ENCODE measurements at regions of chrX and their contacts with region 1.

Region 1: DNA sequence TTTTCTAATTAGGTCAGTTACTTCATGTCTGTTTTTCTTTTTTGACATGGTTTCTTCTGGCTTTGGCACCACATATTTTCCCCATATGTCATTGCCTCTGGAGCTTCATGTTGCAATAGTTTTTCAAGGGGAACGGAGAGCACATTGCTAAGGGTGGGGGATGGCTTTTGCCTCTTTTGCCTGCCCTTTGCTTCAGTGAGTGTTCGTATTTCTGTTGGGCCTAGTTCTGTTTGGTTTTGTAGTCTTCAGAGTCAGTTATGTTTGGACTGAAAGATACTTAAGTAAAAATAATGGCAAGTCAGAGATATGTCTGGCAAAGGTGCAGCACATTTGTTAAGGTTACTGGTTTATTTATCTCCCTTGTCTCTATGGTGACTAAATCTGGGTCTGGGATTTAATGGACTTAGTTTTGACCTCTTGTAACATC is 29.1 kb downstream of the FHL1 start:
- DNase-seq: no peak
- H3K4me3 ChIP-seq: no peak overlapping the region
- H3K27ac ChIP-seq: no peak overlapping the region
- H3K4me1 ChIP-seq: no peaks in the 10 kb centered on the region
- H3K27me3 ChIP-seq: no peaks in the 10 kb centered on the region
- CTCF ChIP-seq: no peak
- POLR2A ChIP-seq: no peak

Region 2: DNA sequence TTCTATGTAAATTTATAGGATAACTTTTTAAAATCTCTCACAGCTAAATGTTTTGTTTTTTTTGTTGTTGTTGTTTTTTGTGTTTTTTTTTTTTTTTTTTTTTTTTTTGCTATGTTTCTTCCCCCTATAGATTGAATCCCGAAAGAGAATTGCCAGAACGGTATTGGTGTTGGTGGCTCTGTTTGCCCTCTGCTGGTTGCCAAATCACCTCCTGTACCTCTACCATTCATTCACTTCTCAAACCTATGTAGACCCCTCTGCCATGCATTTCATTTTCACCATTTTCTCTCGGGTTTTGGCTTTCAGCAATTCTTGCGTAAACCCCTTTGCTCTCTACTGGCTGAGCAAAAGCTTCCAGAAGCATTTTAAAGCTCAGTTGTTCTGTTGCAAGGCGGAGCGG is 315.4 kb after region 1 on chrX:
- CTCF ChIA-PET with region 1: no interaction called
- POLR2A ChIA-PET with region 1: interaction called, 10 read pairs
- dilution Hi-C with region 1: no loop called
- intact Hi-C with region 1: no loop called
- DNase-seq: no peak
- H3K4me3 ChIP-seq: no peak overlapping the region
- H3K27ac ChIP-seq: no peak overlapping the region
- H3K4me1 ChIP-seq: peaks cover 3% of the 10 kb centered on the region
- H3K27me3 ChIP-seq: peaks cover 3 to 13% of the 10 kb centered on the region in 2 experiments
- CTCF ChIP-seq: no peak
- POLR2A ChIP-seq: no peak

Measured in endothelial cell of umbilical vein (primary cell).